ENCODE measurements at regions of chr11 and their contacts with region 1.

Region 1: DNA sequence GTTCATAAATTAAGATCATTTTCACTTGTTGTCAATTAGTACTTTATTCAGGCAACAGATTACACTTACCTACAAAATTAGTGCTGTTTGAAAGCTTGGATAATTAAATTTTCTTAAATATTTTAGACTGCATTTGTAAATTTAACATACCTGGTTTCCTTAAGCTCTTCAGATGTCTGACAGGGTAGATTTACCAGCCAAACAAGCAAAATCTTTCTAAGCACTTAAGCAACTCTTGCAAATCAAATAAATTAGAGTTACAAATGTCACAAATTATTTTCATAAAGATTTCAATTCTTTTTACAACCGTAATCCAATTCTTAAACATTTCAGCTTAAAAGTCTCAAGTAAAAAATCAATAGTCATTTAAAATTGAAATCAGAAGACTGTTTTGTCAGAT is 129.8 kb downstream of the DBX1 start:
- DNase-seq: no peak

Region 2: GRCh38 chr11:19988598-19988997 is 41.9 kb before region 1 on chr11:
- intact Hi-C with region 1: loop called in 1 of 2 experiments (anchors 1 kb)
- DNase-seq: no peak

Region 3: DNA sequence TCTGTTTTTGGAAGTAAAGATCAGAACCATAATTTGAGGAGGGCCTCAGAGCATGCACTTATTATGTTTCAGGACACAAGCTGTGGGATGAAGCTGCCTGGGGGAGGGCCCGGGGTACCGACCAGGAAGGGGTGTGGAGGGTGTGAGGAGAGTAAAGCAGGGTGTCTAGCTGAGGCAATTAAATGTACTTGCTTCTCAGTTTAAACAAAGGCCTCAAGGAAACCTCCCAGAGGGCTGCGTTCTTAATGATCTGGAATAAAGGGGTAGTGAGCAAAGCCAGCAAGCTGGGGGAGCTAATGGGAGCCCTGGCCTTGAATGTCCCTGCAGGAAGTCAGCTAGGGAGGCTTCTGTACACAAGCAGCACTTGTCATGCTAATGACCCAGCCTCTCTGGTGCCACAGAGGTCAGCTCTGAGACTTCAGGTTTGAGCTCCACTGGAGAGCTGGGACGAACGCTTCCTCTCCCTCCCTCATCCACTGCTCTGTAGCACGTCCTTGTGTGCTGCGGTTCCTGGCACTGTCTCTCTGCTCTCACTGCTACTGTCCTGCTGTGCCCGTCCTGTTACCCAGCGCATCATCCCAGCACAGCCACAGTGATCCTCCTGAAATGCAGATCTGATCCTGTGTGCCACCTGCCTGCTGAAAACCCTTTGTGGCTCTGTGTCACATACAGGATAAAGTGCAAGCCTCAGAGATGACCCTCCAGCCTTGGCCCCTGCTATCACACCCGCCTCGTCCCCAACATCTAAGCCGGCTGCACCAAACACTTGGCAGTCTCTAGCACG is 29.9 kb before region 1 on chr11:
- intact Hi-C with region 1: no loop called
- DNase-seq: no peak

Region 4: GRCh38 chr11:20097319-20098221 is 67.1 kb after region 1 on chr11:
- intact Hi-C with region 1: no loop called
- DNase-seq: no peak